T-cell (primary cell): ENCODE measurements at regions of chr18 and their contacts with region 1.

Region 1: DNA sequence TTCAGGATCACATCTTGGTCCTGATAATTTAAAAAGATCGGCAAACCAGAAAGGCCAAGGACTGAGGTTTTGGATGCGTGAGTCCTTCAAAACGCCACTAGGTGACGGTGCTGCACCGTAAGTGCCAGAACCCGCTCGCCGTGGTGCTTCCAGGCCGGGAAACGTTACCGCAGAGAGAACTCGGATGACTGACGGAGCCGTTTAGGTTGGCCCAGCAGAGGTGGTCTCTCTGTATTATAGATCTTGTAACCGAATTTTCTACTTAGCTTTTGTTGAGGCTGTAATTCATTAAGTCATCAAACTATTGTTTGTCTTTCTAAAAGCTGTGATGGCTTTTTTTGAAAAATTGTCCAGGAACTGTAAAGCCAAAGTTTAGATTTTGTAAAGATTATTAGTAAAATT is 39.8 kb upstream of the ADCYAP1 start:
- DNase-seq: peak; percentile 9 to 77 (median 47)
- ATAC-seq: peak; percentile 66 to 72 (median 68)
- H3K4me3 ChIP-seq: no peak overlapping the region
- H3K4me3 Mint-ChIP-seq: no peak overlapping the region
- H3K27ac ChIP-seq: no peak overlapping the region
- H3K27ac Mint-ChIP-seq: no peak overlapping the region
- H3K4me1 ChIP-seq: peaks cover 0 to 3% of the 10 kb centered on the region in 2 experiments
- H3K4me1 Mint-ChIP-seq: peaks cover 0 to 7% (median 6%) of the 10 kb centered on the region in 3 donors
- H3K27me3 ChIP-seq: peaks cover 5 to 17% of the 10 kb centered on the region in 2 experiments
- H3K27me3 Mint-ChIP-seq: peaks cover 13 to 28% of the 10 kb centered on the region in 2 donors

Region 2: DNA sequence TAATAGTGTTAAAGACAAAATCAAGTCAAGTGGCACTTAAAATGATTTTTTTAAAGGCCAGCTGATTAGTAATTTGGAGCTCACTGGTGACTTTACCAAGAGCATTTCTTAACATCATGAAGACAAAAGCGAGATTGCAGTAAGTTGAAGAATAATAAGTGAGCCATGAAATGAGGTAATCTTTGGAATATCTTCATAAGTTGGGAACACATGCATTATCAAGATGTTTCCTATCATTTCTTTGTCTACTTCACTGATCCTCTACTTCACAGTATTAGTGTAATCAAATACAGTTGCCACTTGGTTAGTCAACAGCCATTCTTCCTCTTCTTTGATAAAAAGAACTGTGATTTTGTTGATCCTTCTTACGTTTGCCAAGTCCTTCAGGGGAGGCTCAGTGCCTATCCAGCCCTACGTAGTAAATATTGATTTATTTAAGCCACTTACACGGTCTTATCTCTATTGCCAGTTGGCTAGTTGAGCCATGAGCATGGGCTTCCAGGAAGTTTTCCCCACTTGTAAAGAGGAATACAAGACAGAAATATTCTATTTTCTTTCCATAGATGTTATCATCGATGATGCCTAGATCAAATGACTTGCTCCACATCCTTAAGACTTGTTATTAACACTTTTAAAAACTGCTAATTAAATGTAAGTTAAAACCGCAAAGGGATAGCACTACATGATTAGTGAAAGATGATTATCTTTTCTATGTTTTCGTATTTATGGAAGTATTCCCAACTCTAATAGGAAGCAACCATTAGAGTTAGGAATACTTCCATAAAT is 98.9 kb before region 1 on chr18:
- CTCF ChIA-PET with region 1: no interaction called
- POLR2A ChIA-PET with region 1: no interaction called
- DNase-seq: no peak
- ATAC-seq: no peak
- H3K4me3 ChIP-seq: no peak overlapping the region
- H3K4me3 Mint-ChIP-seq: no peak overlapping the region
- H3K27ac ChIP-seq: no peak overlapping the region
- H3K27ac Mint-ChIP-seq: no peak overlapping the region
- H3K4me1 ChIP-seq: peaks cover 0 to 3% of the 10 kb centered on the region in 2 experiments
- H3K4me1 Mint-ChIP-seq: peaks cover 15 to 22% (median 21%) of the 10 kb centered on the region in 3 donors
- H3K27me3 ChIP-seq: no peaks in the 10 kb centered on the region
- H3K27me3 Mint-ChIP-seq: no peaks in the 10 kb centered on the region

Region 3: DNA sequence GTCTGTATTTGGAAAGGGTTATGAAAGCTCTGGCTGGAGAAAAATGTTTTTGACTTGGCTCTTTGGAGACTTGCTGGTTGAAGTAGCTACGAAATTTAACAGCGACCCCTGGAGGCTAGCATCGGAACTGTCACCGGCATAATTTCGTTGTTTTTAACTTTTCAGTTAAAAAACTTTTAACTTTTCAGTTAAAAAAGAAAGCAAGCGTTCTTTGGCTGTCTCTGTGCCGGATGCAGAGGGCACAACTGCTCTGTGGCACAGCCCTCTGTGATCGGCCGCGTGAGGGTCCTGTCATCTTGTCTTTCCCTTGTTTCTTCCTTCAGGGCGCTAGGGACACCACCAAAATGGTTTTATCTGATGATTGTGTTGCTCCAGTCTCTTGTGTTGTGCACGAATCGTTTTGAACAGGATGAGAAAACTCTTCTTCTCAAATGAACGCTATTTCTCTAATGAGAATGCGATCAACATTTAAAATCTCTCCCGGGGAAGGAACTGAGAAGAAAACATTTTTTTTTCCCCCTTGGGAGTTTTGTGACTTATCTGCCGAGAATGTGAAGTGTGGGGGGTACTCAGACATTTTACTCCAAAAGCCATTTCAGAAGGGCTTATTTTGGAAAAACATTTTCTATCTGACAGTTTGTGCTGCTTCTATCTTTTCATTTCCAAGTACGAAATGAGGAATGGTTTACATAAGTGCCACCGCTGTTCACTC is 96.9 kb after region 1 on chr18:
- CTCF ChIA-PET with region 1: interaction called, 4 to 14 read pairs
- POLR2A ChIA-PET with region 1: no interaction called
- DNase-seq: peak in 30 of 35 experiments; percentile 0 to 59 (median 24)
- ATAC-seq: no peak
- H3K4me3 ChIP-seq: no peak overlapping the region
- H3K4me3 Mint-ChIP-seq: peak overlapping the region in 2 of 3 donors; percentile 30 to 41
- H3K27ac ChIP-seq: no peak overlapping the region
- H3K27ac Mint-ChIP-seq: no peak overlapping the region
- H3K4me1 ChIP-seq: peaks cover 0 to 4% of the 10 kb centered on the region in 2 experiments
- H3K4me1 Mint-ChIP-seq: peaks cover 5 to 9% (median 6%) of the 10 kb centered on the region in 3 donors
- H3K27me3 ChIP-seq: peaks cover 0 to 5% of the 10 kb centered on the region in 2 experiments
- H3K27me3 Mint-ChIP-seq: peaks cover 20 to 41% of the 10 kb centered on the region in 2 donors